ENCODE measurements at regions of chr12 and their contacts with region 1.

Region 1: DNA sequence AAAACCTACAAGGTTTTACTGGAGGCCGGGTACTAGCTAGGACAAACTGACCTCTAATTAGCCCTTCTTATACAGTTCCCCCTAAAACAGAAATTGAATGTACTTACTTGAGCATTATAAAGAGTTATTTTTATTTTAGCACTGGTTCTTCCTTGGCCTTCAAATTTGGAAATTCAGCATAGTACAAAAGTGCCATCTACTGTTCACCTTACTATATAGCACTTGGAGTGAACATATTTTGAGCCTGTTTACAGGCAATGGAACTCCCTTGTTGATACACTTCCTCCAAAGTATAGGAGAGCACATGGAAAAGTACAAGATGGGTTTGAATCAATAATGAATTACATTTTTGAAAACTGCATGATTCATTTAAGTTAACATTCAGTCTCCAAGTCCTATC is 3.9 kb upstream of the POC1B start:
- DNase-seq: peak in 3 of 14 experiments; percentile 69 to 73 (median 72)
- ATAC-seq: peak; percentile 37
- H3K4me3 ChIP-seq: no peak overlapping the region
- H3K4me3 Mint-ChIP-seq: peak overlapping the region; percentile 58
- H3K27ac ChIP-seq: no peak overlapping the region
- H3K27ac Mint-ChIP-seq: peak overlapping the region; percentile 4
- H3K4me1 ChIP-seq: peaks cover 2% of the 10 kb centered on the region
- H3K4me1 Mint-ChIP-seq: peaks cover 19% of the 10 kb centered on the region
- H3K27me3 ChIP-seq: no peaks in the 10 kb centered on the region
- H3K27me3 Mint-ChIP-seq: no peaks in the 10 kb centered on the region
- CTCF ChIP-seq: peak; percentile 81

Region 2: GRCh38 chr12:89461649-89462612 is 67.8 kb before region 1 on chr12:
- CTCF ChIA-PET with region 1: no interaction called
- POLR2A ChIA-PET with region 1: interaction called, 25 read pairs
- intact Hi-C with region 1: loop called in 1 of 2 experiments (anchors 1 kb)
- DNase-seq: peak in 3 of 14 experiments; percentile 68 to 78 (median 69)
- ATAC-seq: peak; percentile 88
- H3K4me3 ChIP-seq: no peak overlapping the region
- H3K4me3 Mint-ChIP-seq: peak overlapping the region; percentile 40
- H3K27ac ChIP-seq: no peak overlapping the region
- H3K27ac Mint-ChIP-seq: no peak overlapping the region
- H3K4me1 ChIP-seq: no peaks in the 10 kb centered on the region
- H3K4me1 Mint-ChIP-seq: peaks cover 16% of the 10 kb centered on the region
- H3K27me3 ChIP-seq: no peaks in the 10 kb centered on the region
- H3K27me3 Mint-ChIP-seq: no peaks in the 10 kb centered on the region
- CTCF ChIP-seq: peak; percentile 81

Region 3: DNA sequence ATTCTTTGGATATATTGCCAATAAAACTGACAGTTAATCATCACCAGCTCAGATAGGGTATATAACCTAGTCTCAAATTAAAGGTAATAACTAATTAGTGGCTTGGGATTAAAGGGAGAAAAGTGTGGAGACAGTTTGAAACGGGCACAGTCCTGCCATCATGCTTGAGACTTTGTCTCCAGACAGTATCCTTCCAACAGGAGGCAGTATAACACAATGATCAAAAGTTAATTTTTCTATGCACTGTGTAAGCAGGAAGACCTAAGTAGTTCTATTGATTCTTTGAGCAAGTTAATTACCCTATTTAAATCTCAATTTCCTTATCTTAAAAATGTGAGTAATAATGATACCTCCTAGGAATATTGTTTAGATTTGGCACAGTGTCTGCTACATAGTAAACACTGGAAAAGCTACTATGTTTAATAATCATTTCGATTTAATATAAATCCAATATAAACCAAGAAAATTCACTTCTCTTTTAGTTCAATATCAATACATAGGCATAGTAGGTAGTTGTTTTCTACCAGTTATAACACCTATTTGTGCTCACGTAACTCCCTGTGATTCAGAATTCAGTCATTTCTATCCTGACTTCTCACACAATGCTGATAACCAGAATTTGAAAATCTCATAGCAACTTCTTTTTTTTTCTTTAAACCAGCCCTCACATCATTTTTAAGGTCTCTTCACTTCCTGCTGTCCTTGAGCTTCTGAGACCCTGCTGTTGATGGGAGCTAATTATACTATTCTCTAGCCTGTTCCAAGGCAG is 58.8 kb before region 1 on chr12:
- CTCF ChIA-PET with region 1: interaction called, 7 read pairs
- POLR2A ChIA-PET with region 1: interaction called, 25 read pairs
- intact Hi-C with region 1: loop called (anchors 1 to 2 kb)
- DNase-seq: peak in 4 of 14 experiments; percentile 26 to 73 (median 72)
- ATAC-seq: peak; percentile 69
- H3K4me3 ChIP-seq: no peak overlapping the region
- H3K4me3 Mint-ChIP-seq: no peak overlapping the region
- H3K27ac ChIP-seq: no peak overlapping the region
- H3K27ac Mint-ChIP-seq: peak overlapping the region; percentile 57
- H3K4me1 ChIP-seq: peaks cover 22% of the 10 kb centered on the region
- H3K4me1 Mint-ChIP-seq: peaks cover 51% of the 10 kb centered on the region
- H3K27me3 ChIP-seq: no peaks in the 10 kb centered on the region
- H3K27me3 Mint-ChIP-seq: no peaks in the 10 kb centered on the region
- CTCF ChIP-seq: peak; percentile 64

Region 4: GRCh38 chr12:89597770-89598169 is 68.0 kb after region 1 on chr12:
- CTCF ChIA-PET with region 1: no interaction called
- POLR2A ChIA-PET with region 1: no interaction called
- intact Hi-C with region 1: no loop called
- DNase-seq: peak in 1 of 14 experiments; percentile 18
- ATAC-seq: no peak
- H3K4me3 ChIP-seq: no peak overlapping the region
- H3K4me3 Mint-ChIP-seq: no peak overlapping the region
- H3K27ac ChIP-seq: no peak overlapping the region
- H3K27ac Mint-ChIP-seq: no peak overlapping the region
- H3K4me1 ChIP-seq: no peaks in the 10 kb centered on the region
- H3K4me1 Mint-ChIP-seq: peaks cover 16% of the 10 kb centered on the region
- H3K27me3 ChIP-seq: no peaks in the 10 kb centered on the region
- H3K27me3 Mint-ChIP-seq: no peaks in the 10 kb centered on the region
- CTCF ChIP-seq: no peak